Psoas muscle (tissue), 8 donors: ENCODE measurements at regions of chr3 and their contacts with region 1.

Region 1: GRCh38 chr3:100150473-100150872 is 36.2 kb upstream of the FILIP1L start:
- DNase-seq: no peak
- ATAC-seq: peak in 3 of 4 donors; percentile 31 to 71 (median 52)
- H3K4me3 ChIP-seq: no peak overlapping the region
- H3K27ac ChIP-seq: peak overlapping the region; percentile 81
- H3K4me1 ChIP-seq: peaks cover 16% of the 10 kb centered on the region
- H3K27me3 ChIP-seq: no peaks in the 10 kb centered on the region
- CTCF ChIP-seq: no peak

Region 2: DNA sequence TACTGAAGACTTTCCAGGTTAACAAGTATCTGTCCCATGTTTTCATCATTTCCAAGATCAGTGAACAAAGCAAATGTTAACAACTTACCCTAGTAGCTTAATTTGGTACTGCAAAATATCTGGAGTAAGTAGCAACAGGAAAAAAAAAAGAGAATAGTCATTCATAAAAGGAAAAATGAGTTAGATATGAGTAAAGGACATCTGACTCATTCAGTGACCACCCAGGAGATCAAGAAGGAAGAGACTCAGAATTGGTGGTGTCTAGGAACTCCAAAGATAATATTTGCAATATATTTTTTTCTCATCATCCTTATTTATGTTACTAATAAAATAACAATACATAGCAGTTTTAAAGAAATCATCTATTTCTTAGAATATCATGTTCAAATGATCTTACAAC is 765.9 kb before region 1 on chr3:
- intact Hi-C with region 1: no loop called
- DNase-seq: no peak
- ATAC-seq: no peak
- H3K4me3 ChIP-seq: no peak overlapping the region
- H3K27ac ChIP-seq: no peak overlapping the region
- H3K4me1 ChIP-seq: no peaks in the 10 kb centered on the region
- H3K27me3 ChIP-seq: no peaks in the 10 kb centered on the region
- CTCF ChIP-seq: no peak

Region 3: GRCh38 chr3:100127792-100128191 is 22.7 kb before region 1 on chr3:
- intact Hi-C with region 1: loop called in 1 of 2 experiments (anchors 2 kb)
- DNase-seq: no peak
- ATAC-seq: no peak
- H3K4me3 ChIP-seq: no peak overlapping the region
- H3K27ac ChIP-seq: no peak overlapping the region
- H3K4me1 ChIP-seq: peaks cover 29% of the 10 kb centered on the region
- H3K27me3 ChIP-seq: no peaks in the 10 kb centered on the region
- CTCF ChIP-seq: no peak